Mammary epithelial cell (primary cell): ENCODE measurements at regions of chr14 and their contacts with region 1.

Region 1: DNA sequence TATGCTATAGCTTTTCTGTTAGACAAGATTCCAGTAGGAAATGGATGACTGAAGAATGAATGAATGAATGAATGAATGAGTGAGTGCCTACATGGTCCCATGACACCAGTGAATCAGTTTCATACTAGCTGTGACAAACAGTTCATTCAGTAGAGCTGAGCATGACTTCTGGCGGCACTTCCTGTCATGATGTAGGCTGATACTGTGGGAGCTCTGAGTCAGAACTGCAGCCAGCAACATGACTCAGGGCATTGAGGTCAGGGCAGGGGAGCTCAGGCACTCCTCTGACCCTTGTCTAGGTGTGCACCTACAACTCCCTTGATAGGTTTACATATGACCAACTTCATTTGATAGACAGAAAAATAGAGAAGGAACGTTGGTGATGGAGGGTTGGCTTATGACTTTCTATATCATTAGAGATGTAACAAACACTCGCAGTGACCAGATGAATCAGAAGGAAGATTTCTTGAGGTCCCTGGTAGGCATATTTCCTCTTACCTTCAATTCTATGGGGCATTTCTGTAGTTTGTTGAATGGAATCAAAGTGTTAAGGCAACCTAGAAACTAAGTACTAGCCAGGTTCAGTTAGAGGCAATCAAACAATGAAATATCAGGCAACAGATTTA is 139.3 kb upstream of the ARHGAP5 start:
- DNase-seq: peak; percentile 99
- H3K4me3 ChIP-seq: no peak overlapping the region
- H3K27ac ChIP-seq: peak overlapping the region; percentile 93
- H3K4me1 ChIP-seq: peaks cover 21% of the 10 kb centered on the region
- H3K27me3 ChIP-seq: no peaks in the 10 kb centered on the region
- CTCF ChIP-seq: no peak

Region 2: DNA sequence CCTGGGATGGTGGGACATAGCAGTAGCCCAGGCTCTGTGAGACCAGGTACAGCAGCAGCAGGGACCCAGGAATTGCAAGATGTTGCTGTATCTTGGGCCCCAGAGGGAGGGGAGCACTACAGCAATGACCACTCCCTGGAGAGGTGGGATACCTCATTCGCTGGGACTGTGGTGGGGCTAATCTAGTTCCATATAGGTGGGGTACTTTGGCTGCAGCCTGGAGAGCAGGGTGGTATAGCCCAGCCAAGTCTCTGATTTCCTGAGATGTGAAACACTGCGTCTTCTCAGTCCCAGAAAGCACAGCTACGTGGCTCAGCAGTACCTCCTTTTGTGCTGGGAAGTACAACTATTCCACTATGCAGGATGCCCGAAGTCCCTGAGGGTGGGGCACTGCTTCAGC is 24.5 kb before region 1 on chr14:
- CTCF ChIA-PET with region 1: no interaction called
- dilution Hi-C with region 1: no loop called
- in situ Hi-C with region 1: no loop called
- intact Hi-C with region 1: no loop called
- DNase-seq: no peak
- H3K4me3 ChIP-seq: no peak overlapping the region
- H3K27ac ChIP-seq: no peak overlapping the region
- H3K4me1 ChIP-seq: no peaks in the 10 kb centered on the region
- H3K27me3 ChIP-seq: no peaks in the 10 kb centered on the region
- CTCF ChIP-seq: no peak

Region 3: GRCh38 chr14:32167907-32168306 is 230.1 kb after region 1 on chr14:
- CTCF ChIA-PET with region 1: no interaction called
- dilution Hi-C with region 1: no loop called
- in situ Hi-C with region 1: no loop called
- intact Hi-C with region 1: loop called (anchors 5 kb)
- DNase-seq: peak; percentile 58
- H3K4me3 ChIP-seq: no peak overlapping the region
- H3K27ac ChIP-seq: no peak overlapping the region
- H3K4me1 ChIP-seq: no peaks in the 10 kb centered on the region
- H3K27me3 ChIP-seq: no peaks in the 10 kb centered on the region
- CTCF ChIP-seq: no peak

Region 4: DNA sequence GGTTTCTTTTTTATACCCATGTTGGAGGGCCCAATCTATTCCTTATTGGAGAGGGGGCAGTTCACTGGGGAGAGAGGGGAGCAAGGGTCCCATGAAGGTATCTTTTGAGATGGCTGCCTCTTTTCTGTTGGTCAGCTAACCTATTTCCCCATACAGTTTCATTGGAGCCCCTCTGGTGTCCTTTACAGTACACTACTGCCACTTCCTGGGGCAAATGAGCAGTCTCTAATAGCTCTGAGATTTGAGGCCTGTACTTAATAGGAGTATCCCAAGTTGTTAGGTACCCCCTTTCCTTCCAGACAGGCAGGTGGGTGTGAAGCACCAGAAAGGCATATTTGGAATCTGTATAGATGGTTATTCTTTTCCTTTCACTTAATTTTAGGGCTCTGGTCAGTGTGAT is 306.6 kb after region 1 on chr14:
- CTCF ChIA-PET with region 1: no interaction called
- dilution Hi-C with region 1: no loop called
- in situ Hi-C with region 1: loop called in 1 of 2 experiments (anchors 10 kb)
- intact Hi-C with region 1: loop called (anchors 2 kb)
- DNase-seq: no peak
- H3K4me3 ChIP-seq: no peak overlapping the region
- H3K27ac ChIP-seq: no peak overlapping the region
- H3K4me1 ChIP-seq: peaks cover 2% of the 10 kb centered on the region
- H3K27me3 ChIP-seq: no peaks in the 10 kb centered on the region
- CTCF ChIP-seq: peak in 1 of 2 donors; percentile 8

Region 5: GRCh38 chr14:32382704-32383103 is 444.9 kb after region 1 on chr14:
- CTCF ChIA-PET with region 1: interaction called, 4 read pairs
- dilution Hi-C with region 1: no loop called
- in situ Hi-C with region 1: no loop called
- intact Hi-C with region 1: loop called (anchors 1 kb)
- DNase-seq: peak; percentile 41
- H3K4me3 ChIP-seq: no peak overlapping the region
- H3K27ac ChIP-seq: no peak overlapping the region
- H3K4me1 ChIP-seq: peaks cover 9% of the 10 kb centered on the region
- H3K27me3 ChIP-seq: no peaks in the 10 kb centered on the region
- CTCF ChIP-seq: peak; percentile 65 to 88

Region 6: DNA sequence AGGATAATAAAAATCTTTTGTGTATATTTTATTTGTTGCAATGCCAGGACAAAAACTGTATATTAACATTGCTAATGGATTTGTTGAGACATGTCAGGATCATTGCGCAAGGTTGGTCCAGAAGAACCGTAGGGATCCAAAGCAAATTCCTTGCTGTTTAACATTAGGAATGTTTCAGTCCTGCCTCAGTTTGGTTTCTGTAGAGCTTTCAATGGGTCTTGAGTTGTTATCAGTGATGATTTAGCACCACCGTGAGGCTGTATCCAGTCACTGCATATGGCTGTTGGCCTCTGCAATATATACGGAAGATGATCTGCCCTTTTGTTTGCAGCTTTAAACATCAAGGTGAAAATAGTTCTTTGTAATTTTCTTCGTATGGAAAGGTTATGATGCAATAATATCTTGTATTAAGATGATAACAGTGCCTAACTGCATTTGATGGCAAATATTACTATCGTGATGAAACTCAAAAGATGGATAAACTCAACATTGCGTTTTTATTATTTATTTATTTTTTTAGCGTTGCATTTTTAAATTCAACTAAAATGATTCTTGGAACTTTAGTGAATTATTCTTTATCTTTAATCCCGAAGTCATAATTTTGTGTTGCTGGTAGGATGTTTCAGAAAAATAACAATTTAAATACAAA is 622.5 kb after region 1 on chr14:
- CTCF ChIA-PET with region 1: no interaction called
- dilution Hi-C with region 1: no loop called
- in situ Hi-C with region 1: no loop called
- intact Hi-C with region 1: loop called (anchors 1 kb)
- DNase-seq: peak; percentile 74
- H3K4me3 ChIP-seq: no peak overlapping the region
- H3K27ac ChIP-seq: peak overlapping the region; percentile 53
- H3K4me1 ChIP-seq: peaks cover 19% of the 10 kb centered on the region
- H3K27me3 ChIP-seq: no peaks in the 10 kb centered on the region
- CTCF ChIP-seq: peak; percentile 84 to 98